Activated CD4-positive, alpha-beta T cell treated with anti-CD3 and anti-CD28 coated beads, Interleukin-2, amount 10 ng/mL, durations not matched to agents 24 days and 14 days (primary cell): ENCODE measurements at regions of chr2 and their contacts with region 1.

Region 1: DNA sequence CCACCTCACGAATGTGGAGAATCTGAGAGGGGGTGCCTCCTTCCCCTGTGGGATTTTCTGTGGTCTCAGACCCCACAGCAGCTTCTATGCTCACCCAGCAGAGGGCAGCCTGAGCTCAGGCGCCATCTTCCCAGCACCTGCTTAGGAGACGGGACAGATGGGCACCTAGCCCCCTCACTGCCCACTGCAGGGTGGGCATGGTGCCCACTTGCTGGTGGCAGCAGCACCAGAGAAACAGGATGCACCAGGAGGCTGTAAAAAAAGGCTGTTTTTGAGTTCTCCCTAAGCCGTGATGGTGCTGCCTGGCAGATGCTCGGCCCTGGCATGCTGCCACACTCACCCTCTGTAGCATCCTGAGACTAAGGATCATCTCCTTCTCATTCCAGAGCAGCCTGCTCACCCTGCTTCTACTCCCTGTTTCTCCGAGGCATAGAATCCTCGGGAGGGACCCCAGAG is 19.1 kb upstream of the SLC20A1 start:
- DNase-seq: peak; percentile 89
- H3K4me3 Mint-ChIP-seq: peak overlapping the region; percentile 56
- H3K27ac Mint-ChIP-seq: peak overlapping the region; percentile 90
- H3K4me1 Mint-ChIP-seq: peaks cover 74% of the 10 kb centered on the region
- H3K27me3 Mint-ChIP-seq: no peaks in the 10 kb centered on the region

Region 2: DNA sequence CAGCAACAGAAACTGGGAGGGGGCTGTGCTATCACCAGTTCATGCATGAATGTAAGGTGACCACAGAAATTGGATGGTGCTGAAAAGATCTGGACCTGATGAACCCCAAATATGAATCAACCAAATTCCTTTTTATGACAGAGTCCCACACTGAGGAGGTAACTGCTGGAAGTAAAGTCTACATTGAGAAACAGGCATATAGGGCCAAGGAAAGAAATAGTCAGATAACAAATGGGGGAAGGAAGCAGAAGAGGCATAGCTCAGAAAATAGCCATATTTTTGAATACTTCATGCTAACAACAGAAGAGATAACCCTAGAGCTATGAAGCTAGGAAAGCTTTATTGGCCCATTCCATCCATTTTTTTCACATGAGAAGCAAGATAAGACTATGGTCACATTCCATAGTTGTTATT is 325.5 kb before region 1 on chr2:
- intact Hi-C with region 1: no loop called
- DNase-seq: no peak
- H3K4me3 Mint-ChIP-seq: no peak overlapping the region
- H3K27ac Mint-ChIP-seq: no peak overlapping the region
- H3K4me1 Mint-ChIP-seq: peaks cover 5% of the 10 kb centered on the region
- H3K27me3 Mint-ChIP-seq: no peaks in the 10 kb centered on the region

Region 3: DNA sequence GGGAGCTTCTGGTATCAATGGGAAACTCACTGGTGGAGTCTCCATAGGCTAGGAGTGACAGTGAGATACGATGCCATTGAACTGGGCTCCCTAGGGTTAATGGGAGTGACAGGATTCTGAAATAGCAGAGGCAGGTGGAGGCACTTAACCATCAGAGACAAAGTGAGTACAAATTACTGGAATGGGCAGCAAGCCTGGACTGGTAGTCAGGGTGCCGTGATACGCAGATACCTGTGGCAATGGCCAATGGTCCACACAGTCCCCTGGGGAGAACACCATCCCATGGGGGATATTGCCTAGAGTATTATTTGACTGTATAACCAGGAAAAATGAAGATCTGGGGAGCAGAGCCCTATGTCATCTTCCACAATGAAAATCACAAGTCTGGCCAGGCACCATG is 24.9 kb before region 1 on chr2:
- intact Hi-C with region 1: loop called (anchors 1 kb)
- DNase-seq: no peak
- H3K4me3 Mint-ChIP-seq: no peak overlapping the region
- H3K27ac Mint-ChIP-seq: no peak overlapping the region
- H3K4me1 Mint-ChIP-seq: peaks cover 5% of the 10 kb centered on the region
- H3K27me3 Mint-ChIP-seq: no peaks in the 10 kb centered on the region

Region 4: DNA sequence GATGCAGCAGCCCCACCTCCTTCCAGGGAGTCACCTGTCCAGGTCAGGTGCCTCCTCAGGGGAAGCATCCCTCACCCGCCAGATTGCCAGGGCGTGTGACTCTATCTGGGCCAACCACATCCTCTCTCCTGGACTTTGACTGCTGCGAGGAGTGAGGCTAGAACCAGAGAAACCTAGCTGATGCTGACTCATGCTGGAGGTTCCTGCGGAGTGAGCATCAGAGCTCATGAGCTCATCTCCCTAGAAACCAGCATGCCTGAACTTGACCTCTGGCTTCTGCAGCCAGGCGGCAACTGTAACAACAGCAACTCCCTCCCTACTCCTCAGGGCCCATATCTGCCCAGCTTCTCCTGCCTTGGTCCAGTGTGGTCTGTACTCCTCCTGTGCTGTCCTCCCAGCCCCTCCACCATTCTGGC is 65.9 kb after region 1 on chr2:
- intact Hi-C with region 1: loop called (anchors 1 kb)
- DNase-seq: peak; percentile 90
- H3K4me3 Mint-ChIP-seq: peak overlapping the region; percentile 50
- H3K27ac Mint-ChIP-seq: peak overlapping the region; percentile 80
- H3K4me1 Mint-ChIP-seq: peaks cover 33% of the 10 kb centered on the region
- H3K27me3 Mint-ChIP-seq: no peaks in the 10 kb centered on the region

Region 5: DNA sequence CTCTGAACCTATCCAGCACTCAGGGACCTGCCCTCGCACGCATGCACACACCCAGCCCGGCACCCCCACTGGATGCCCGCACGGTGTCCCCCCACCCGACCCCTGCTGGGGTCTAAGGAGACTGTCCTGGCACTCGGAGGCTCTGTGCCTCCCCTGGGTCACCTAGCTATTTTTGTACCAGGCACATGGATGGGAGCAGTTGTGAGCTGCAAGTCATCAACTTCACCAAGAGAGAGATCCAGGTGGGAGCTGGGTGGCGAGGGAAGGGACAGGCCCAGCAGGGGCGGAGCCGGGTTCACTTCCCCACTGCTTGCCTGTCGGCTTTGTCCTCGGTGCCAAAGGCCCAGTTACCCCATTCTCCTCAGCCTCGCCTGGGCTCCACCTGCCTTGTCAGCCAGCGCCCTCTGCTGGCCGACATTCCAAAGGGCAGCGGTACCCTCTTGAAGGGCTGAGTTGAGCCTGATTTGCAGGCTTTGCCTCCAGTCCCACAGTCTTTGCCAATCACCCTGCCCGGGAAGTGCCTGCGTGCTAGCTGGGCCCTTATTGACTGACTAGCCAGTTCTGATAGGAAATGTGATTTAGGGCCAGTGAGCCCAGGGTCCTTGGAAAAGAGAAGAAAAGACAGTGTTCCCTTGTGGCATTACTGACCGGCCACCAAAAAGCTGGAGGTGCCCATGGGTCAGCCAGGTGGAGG is 100.0 kb after region 1 on chr2:
- intact Hi-C with region 1: loop called (anchors 1 kb)
- DNase-seq: peak; percentile 97
- H3K4me3 Mint-ChIP-seq: no peak overlapping the region
- H3K27ac Mint-ChIP-seq: peak overlapping the region; percentile 32
- H3K4me1 Mint-ChIP-seq: peaks cover 25% of the 10 kb centered on the region
- H3K27me3 Mint-ChIP-seq: peaks cover 2% of the 10 kb centered on the region

Region 6: DNA sequence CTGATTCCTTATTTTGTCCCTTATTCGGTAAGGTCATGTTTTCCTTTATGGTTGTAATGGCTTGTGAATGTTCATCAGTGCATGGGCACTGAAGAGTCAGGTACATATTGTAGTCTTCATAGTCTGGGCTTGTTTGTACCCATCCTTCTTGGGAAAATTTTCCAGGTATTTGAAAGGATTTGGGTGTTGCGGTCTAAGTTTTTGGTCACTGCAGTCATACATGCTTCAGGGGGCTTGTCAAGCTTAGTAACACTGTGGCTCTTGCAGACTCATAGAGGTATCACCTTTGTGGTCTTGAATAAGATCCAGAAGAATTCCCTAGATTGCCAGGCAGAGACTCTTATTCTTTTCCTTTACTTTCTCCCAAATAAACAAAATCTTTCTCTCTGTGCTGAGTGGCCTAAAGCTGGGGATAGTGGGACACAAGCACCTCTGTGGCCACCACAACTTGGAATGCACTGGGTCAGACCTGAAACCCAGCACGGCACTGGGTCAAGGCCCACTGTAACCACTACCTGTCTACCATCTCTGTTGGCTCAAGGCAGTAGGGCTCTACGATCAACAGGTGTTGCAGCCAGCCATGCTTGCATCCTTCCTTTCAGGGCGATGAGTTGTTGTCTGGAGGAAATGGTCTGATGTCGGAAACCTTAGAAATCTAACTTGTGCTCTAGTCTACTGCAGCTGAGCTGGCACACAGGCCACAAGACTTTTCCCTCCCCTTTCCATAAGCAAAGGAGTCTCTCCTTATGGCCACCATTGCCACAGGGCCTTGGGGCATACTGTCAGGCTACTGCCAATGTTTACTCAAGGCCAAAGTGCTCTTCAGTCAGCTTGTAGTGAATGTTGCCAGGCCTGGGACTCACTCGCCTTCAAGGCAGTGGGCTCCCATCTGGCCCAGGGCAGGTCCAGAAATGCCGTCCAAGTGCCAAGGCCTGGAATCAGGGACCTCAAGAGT is 522.3 kb after region 1 on chr2:
- intact Hi-C with region 1: no loop called
- DNase-seq: no peak
- H3K4me3 Mint-ChIP-seq: no peak overlapping the region
- H3K27ac Mint-ChIP-seq: no peak overlapping the region
- H3K4me1 Mint-ChIP-seq: no peaks in the 10 kb centered on the region
- H3K27me3 Mint-ChIP-seq: peaks cover 27% of the 10 kb centered on the region